ENCODE measurements at regions of chr6 and their contacts with region 1.

Region 1: GRCh38 chr6:44113414-44113813 is 13.8 kb downstream of the MRPL14 start:
- DNase-seq: no peak
- H3K4me3 ChIP-seq: no peak overlapping the region
- H3K27ac ChIP-seq: no peak overlapping the region
- H3K4me1 ChIP-seq: peaks cover 7% of the 10 kb centered on the region
- H3K27me3 ChIP-seq: no peaks in the 10 kb centered on the region
- CTCF ChIP-seq: 0 out of 2 replicates have a peak, but pooled peaks have one; percentile 15

Region 2: GRCh38 chr6:43627008-43627825 is 486.2 kb before region 1 on chr6:
- CTCF ChIA-PET with region 1: no interaction called
- POLR2A ChIA-PET with region 1: interaction called, 10 read pairs
- intact Hi-C with region 1: no loop called
- DNase-seq: peak; percentile 35
- H3K4me3 ChIP-seq: peak overlapping the region; percentile 60
- H3K27ac ChIP-seq: peak overlapping the region; percentile 71
- H3K4me1 ChIP-seq: peaks cover 19% of the 10 kb centered on the region
- H3K27me3 ChIP-seq: no peaks in the 10 kb centered on the region
- CTCF ChIP-seq: no peak

Region 3: GRCh38 chr6:43702534-43703440 is 410.6 kb before region 1 on chr6:
- CTCF ChIA-PET with region 1: no interaction called
- POLR2A ChIA-PET with region 1: no interaction called
- intact Hi-C with region 1: no loop called
- DNase-seq: peak; percentile 82
- H3K4me3 ChIP-seq: no peak overlapping the region
- H3K27ac ChIP-seq: no peak overlapping the region
- H3K4me1 ChIP-seq: peaks cover 26% of the 10 kb centered on the region
- H3K27me3 ChIP-seq: no peaks in the 10 kb centered on the region
- CTCF ChIP-seq: no peak